ENCODE measurements at regions of chr14 and their contacts with region 1.

Region 1: GRCh38 chr14:101964297-101965144 is at the start of gene DYNC1H1:
- DNase-seq: peak; percentile 82 to 94 (median 90)
- ATAC-seq: peak; percentile 94
- H3K4me3 ChIP-seq: peak within 1 kb of the TSS; percentile 77
- H3K4me3 Mint-ChIP-seq: peak within 1 kb of the TSS; percentile 85 to 92 (median 90)
- H3K27ac ChIP-seq: peak within 1 kb of the TSS; percentile 88
- H3K27ac Mint-ChIP-seq: peak within 1 kb of the TSS; percentile 76 to 93 (median 91)
- H3K4me1 ChIP-seq: peaks cover 20% of the 10 kb centered on the region in 2 donors
- H3K4me1 Mint-ChIP-seq: peaks cover 33 to 55% (median 50%) of the 10 kb centered on the region in 7 donors
- H3K27me3 ChIP-seq: no peaks in the 10 kb centered on the region
- H3K27me3 Mint-ChIP-seq: peaks cover 0 to 2% (median 0%) of the 10 kb centered on the region in 5 donors
- total RNA-seq, gene DYNC1H1: 252 to 310 (median 273) TPM

Region 2: GRCh38 chr14:101774006-101774795 is 190.3 kb before region 1 on chr14:
- CTCF ChIA-PET with region 1: interaction called, 4 read pairs
- POLR2A ChIA-PET with region 1: interaction called, 3 read pairs
- intact Hi-C with region 1: loop called in 1 of 2 experiments (anchors 1 kb)
- DNase-seq: no peak
- ATAC-seq: no peak
- H3K4me3 ChIP-seq: no peak overlapping the region
- H3K4me3 Mint-ChIP-seq: no peak overlapping the region
- H3K27ac ChIP-seq: no peak overlapping the region
- H3K27ac Mint-ChIP-seq: peak overlapping the region in 6 of 9 donors; percentile 14 to 70 (median 28)
- H3K4me1 ChIP-seq: no peaks in the 10 kb centered on the region
- H3K4me1 Mint-ChIP-seq: peaks cover 18 to 41% (median 35%) of the 10 kb centered on the region in 7 donors
- H3K27me3 ChIP-seq: no peaks in the 10 kb centered on the region
- H3K27me3 Mint-ChIP-seq: peaks cover 0 to 8% (median 0%) of the 10 kb centered on the region in 5 donors

Region 3: GRCh38 chr14:101947906-101948665 is 16.4 kb before region 1 on chr14:
- CTCF ChIA-PET with region 1: interaction called, 6 read pairs
- POLR2A ChIA-PET with region 1: interaction called, 11 read pairs
- intact Hi-C with region 1: loop called (anchors 1 kb)
- DNase-seq: peak; percentile 95 to 100 (median 99)
- ATAC-seq: peak; percentile 97
- H3K4me3 ChIP-seq: peak overlapping the region; percentile 96
- H3K4me3 Mint-ChIP-seq: peak overlapping the region; percentile 86 to 99 (median 98)
- H3K27ac ChIP-seq: peak overlapping the region; percentile 99
- H3K27ac Mint-ChIP-seq: peak overlapping the region; percentile 97 to 100 (median 99)
- H3K4me1 ChIP-seq: peaks cover 9 to 10% of the 10 kb centered on the region in 2 donors
- H3K4me1 Mint-ChIP-seq: peaks cover 17 to 34% (median 25%) of the 10 kb centered on the region in 7 donors
- H3K27me3 ChIP-seq: no peaks in the 10 kb centered on the region
- H3K27me3 Mint-ChIP-seq: peaks cover 15 to 37% (median 30%) of the 10 kb centered on the region in 5 donors

Region 4: DNA sequence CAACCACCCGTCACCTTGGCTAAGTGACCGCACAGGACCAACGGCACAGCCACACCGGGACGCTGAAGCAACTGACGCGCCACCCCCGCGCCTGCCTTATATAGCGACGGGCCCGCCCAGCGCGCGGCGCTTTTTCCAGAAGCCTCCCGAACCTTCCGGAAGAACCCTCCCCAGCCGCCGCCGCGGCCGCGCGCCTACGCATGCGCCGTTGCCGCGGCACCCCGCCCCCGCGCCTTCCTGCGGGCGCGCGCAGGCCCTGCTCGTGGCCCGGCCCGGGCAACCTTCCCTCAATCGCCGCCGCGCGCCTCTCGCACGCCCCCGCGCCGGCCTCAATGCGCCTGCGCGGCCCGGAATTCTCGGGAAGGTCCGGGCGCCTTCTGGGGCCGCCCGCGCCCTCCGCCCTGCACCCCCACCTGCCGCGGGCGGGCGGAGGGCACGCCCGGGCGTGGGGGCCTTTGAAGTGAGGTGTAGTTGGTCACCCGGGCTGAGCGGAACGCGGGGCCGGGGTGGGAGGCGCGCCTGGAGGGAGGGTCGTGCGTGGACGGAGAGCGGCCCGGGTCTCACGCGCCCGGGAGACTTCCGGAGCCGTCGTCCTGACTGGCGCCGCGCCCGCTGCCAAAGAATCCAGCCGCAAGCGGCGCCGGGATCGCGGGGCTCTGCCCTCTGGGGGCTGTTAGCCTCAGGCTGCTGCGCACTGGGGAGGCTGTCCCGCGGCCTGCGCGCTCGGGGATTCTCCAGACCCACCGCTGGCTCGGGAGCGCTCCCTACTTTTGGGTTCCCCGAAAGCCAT is 122.6 kb after region 1 on chr14 and contains the start of gene HSP90AA1:
- CTCF ChIA-PET with region 1: no interaction called
- POLR2A ChIA-PET with region 1: interaction called, 11 read pairs
- intact Hi-C with region 1: loop called (anchors 1 to 2 kb)
- DNase-seq: peak; percentile 89 to 99 (median 94)
- ATAC-seq: peak; percentile 87
- H3K4me3 ChIP-seq: peak within 1 kb of the TSS; percentile 91
- H3K4me3 Mint-ChIP-seq: peak within 1 kb of the TSS; percentile 90 to 98 (median 96)
- H3K27ac ChIP-seq: peak within 1 kb of the TSS; percentile 98
- H3K27ac Mint-ChIP-seq: peak within 1 kb of the TSS; percentile 93 to 98 (median 96)
- H3K4me1 ChIP-seq: peaks cover 41 to 43% of the 10 kb centered on the region in 2 donors
- H3K4me1 Mint-ChIP-seq: peaks cover 44 to 70% (median 62%) of the 10 kb centered on the region in 7 donors
- H3K27me3 ChIP-seq: no peaks in the 10 kb centered on the region
- H3K27me3 Mint-ChIP-seq: no peaks in the 10 kb centered on the region
- total RNA-seq, gene HSP90AA1: 229 to 591 (median 361) TPM

Region 5: GRCh38 chr14:102139248-102140026 is 174.9 kb after region 1 on chr14 and contains the start of gene WDR20:
- CTCF ChIA-PET with region 1: no interaction called
- POLR2A ChIA-PET with region 1: no interaction called
- intact Hi-C with region 1: loop called (anchors 1 to 5 kb)
- DNase-seq: peak; percentile 98 to 100 (median 99)
- ATAC-seq: peak; percentile 98
- H3K4me3 ChIP-seq: peak within 1 kb of the TSS; percentile 80
- H3K4me3 Mint-ChIP-seq: peak within 1 kb of the TSS; percentile 96 to 99 (median 98)
- H3K27ac ChIP-seq: peak within 1 kb of the TSS; percentile 90
- H3K27ac Mint-ChIP-seq: peak within 1 kb of the TSS; percentile 95 to 99 (median 96)
- H3K4me1 ChIP-seq: peaks cover 18 to 22% of the 10 kb centered on the region in 2 donors
- H3K4me1 Mint-ChIP-seq: peaks cover 17 to 36% (median 26%) of the 10 kb centered on the region in 7 donors
- H3K27me3 ChIP-seq: no peaks in the 10 kb centered on the region
- H3K27me3 Mint-ChIP-seq: no peaks in the 10 kb centered on the region
- total RNA-seq, gene WDR20: 33.1 to 67.8 (median 47.5) TPM

Region 6: DNA sequence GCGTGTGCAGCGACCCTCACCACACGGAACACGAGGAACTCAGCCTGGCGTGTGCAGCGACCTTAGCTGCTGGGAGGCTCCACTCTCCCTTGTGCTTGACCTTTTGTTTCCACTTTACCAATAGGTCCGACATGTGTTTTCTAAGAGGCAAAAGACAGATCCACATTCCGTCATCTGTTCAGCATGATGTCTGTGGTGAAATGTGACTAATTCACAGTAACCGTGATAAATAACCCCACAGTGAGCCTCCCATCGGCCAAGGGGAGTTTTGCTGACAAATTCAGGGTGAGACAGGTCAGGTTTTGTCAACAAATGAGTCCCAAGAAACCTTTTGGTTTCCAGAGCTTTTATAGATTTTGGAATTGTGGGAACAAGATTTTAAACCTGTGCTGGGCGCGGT is 284.5 kb after region 1 on chr14:
- CTCF ChIA-PET with region 1: no interaction called
- POLR2A ChIA-PET with region 1: no interaction called
- intact Hi-C with region 1: no loop called
- DNase-seq: no peak
- ATAC-seq: no peak
- H3K4me3 ChIP-seq: no peak overlapping the region
- H3K4me3 Mint-ChIP-seq: no peak overlapping the region
- H3K27ac ChIP-seq: no peak overlapping the region
- H3K27ac Mint-ChIP-seq: no peak overlapping the region
- H3K4me1 ChIP-seq: no peaks in the 10 kb centered on the region
- H3K4me1 Mint-ChIP-seq: no peaks in the 10 kb centered on the region
- H3K27me3 ChIP-seq: no peaks in the 10 kb centered on the region
- H3K27me3 Mint-ChIP-seq: no peaks in the 10 kb centered on the region

Region 7: GRCh38 chr14:102362545-102363181 is 398.1 kb after region 1 on chr14 and contains the starts of genes CINP and TECPR2:
- CTCF ChIA-PET with region 1: no interaction called
- POLR2A ChIA-PET with region 1: no interaction called
- intact Hi-C with region 1: loop called (anchors 1 kb)
- DNase-seq: peak; percentile 88 to 95 (median 92)
- ATAC-seq: peak; percentile 97
- H3K4me3 ChIP-seq: peak within 1 kb of the TSS; percentile 96
- H3K4me3 Mint-ChIP-seq: peak within 1 kb of the TSS in 6 of 10 donors; percentile 92 to 97 (median 95)
- H3K27ac ChIP-seq: peak within 1 kb of the TSS; percentile 87
- H3K27ac Mint-ChIP-seq: peak within 1 kb of the TSS; percentile 82 to 99 (median 96)
- H3K4me1 ChIP-seq: peaks cover 6 to 15% of the 10 kb centered on the region in 2 donors
- H3K4me1 Mint-ChIP-seq: peaks cover 17 to 42% (median 36%) of the 10 kb centered on the region in 7 donors
- H3K27me3 ChIP-seq: no peaks in the 10 kb centered on the region
- H3K27me3 Mint-ChIP-seq: no peaks in the 10 kb centered on the region
- total RNA-seq, gene CINP: 16.8 to 34.4 (median 31.8) TPM
- total RNA-seq, gene TECPR2: 8.7 to 12.9 (median 11.4) TPM

Region 8: GRCh38 chr14:102516531-102517415 is 552.3 kb after region 1 on chr14:
- CTCF ChIA-PET with region 1: interaction called, 3 read pairs
- POLR2A ChIA-PET with region 1: no interaction called
- intact Hi-C with region 1: loop called (anchors 1 to 2 kb)
- DNase-seq: peak; percentile 32 to 85 (median 58)
- ATAC-seq: peak; percentile 90
- H3K4me3 ChIP-seq: peak overlapping the region; percentile 61
- H3K4me3 Mint-ChIP-seq: peak overlapping the region; percentile 79 to 91 (median 86)
- H3K27ac ChIP-seq: peak overlapping the region; percentile 35
- H3K27ac Mint-ChIP-seq: peak overlapping the region in 4 of 9 donors; percentile 32 to 86 (median 58)
- H3K4me1 ChIP-seq: peaks cover 0 to 3% of the 10 kb centered on the region in 2 donors
- H3K4me1 Mint-ChIP-seq: peaks cover 3 to 6% (median 5%) of the 10 kb centered on the region in 7 donors
- H3K27me3 ChIP-seq: no peaks in the 10 kb centered on the region
- H3K27me3 Mint-ChIP-seq: peaks cover 0 to 8% (median 4%) of the 10 kb centered on the region in 5 donors